ENCODE measurements at regions of chr14 and their contacts with region 1.

Region 1: GRCh38 chr14:92680781-92681650 is 67.4 kb downstream of the LGMN start:
- DNase-seq: peak; percentile 93
- H3K4me3 Mint-ChIP-seq: no peak overlapping the region
- H3K27ac Mint-ChIP-seq: peak overlapping the region; percentile 48
- H3K4me1 Mint-ChIP-seq: peaks cover 29% of the 10 kb centered on the region
- H3K27me3 Mint-ChIP-seq: no peaks in the 10 kb centered on the region

Region 2: GRCh38 chr14:92340931-92341330 is 340.1 kb before region 1 on chr14:
- intact Hi-C with region 1: loop called (anchors 5 kb)
- DNase-seq: peak; percentile 56
- H3K4me3 Mint-ChIP-seq: peak overlapping the region; percentile 21
- H3K27ac Mint-ChIP-seq: peak overlapping the region; percentile 10
- H3K4me1 Mint-ChIP-seq: peaks cover 15% of the 10 kb centered on the region
- H3K27me3 Mint-ChIP-seq: peaks cover 56% of the 10 kb centered on the region

Region 3: GRCh38 chr14:92556255-92556741 is 124.7 kb before region 1 on chr14:
- intact Hi-C with region 1: loop called (anchors 1 kb)
- DNase-seq: no peak
- H3K4me3 Mint-ChIP-seq: peak overlapping the region; percentile 33
- H3K27ac Mint-ChIP-seq: peak overlapping the region; percentile 88
- H3K4me1 Mint-ChIP-seq: peaks cover 62% of the 10 kb centered on the region
- H3K27me3 Mint-ChIP-seq: peaks cover 17% of the 10 kb centered on the region

Region 4: GRCh38 chr14:92615451-92615850 is 65.6 kb before region 1 on chr14:
- intact Hi-C with region 1: loop called (anchors 2 kb)
- DNase-seq: peak; percentile 92
- H3K4me3 Mint-ChIP-seq: peak overlapping the region; percentile 27
- H3K27ac Mint-ChIP-seq: peak overlapping the region; percentile 36
- H3K4me1 Mint-ChIP-seq: peaks cover 31% of the 10 kb centered on the region
- H3K27me3 Mint-ChIP-seq: no peaks in the 10 kb centered on the region

Region 5: DNA sequence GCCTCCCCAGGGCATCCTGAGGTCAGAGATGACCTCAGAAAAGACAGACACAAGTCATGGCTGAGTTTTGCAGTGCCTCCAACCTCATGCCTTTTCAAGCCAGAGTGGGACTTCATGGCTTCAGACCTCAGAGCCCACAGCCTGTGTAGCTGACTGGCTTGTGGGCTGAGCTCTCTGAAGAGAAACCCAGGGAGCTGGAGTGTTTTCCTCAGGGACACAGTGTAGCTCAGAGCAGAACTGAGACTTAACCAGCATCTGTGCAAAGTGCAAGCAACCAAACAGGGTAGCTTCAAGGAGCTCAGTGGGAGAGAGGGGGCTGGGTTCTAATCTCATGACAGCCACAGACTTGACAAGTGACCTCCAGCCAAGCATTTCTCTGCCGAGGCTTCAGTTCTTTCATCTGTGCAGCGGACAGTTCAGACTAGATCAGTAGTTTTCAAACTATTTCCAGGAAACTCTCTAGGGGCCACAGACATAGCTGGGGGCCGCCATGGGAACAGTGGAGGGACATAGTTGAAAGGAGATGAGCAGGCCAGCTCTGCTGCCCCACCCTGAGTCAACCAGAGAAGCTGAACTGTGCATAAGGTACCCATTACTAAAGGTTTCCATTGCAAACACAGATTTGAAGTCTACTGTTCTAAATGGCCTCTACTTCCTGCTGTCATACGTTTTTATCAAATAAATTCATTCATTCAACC is 12.6 kb before region 1 on chr14:
- intact Hi-C with region 1: loop called (anchors 1 kb)
- DNase-seq: no peak
- H3K4me3 Mint-ChIP-seq: no peak overlapping the region
- H3K27ac Mint-ChIP-seq: peak overlapping the region; percentile 81
- H3K4me1 Mint-ChIP-seq: peaks cover 43% of the 10 kb centered on the region
- H3K27me3 Mint-ChIP-seq: no peaks in the 10 kb centered on the region

Region 6: GRCh38 chr14:92737206-92737605 is 56.2 kb after region 1 on chr14:
- intact Hi-C with region 1: no loop called
- DNase-seq: no peak
- H3K4me3 Mint-ChIP-seq: peak overlapping the region; percentile 29
- H3K27ac Mint-ChIP-seq: peak overlapping the region; percentile 3
- H3K4me1 Mint-ChIP-seq: peaks cover 10% of the 10 kb centered on the region
- H3K27me3 Mint-ChIP-seq: peaks cover 46% of the 10 kb centered on the region